ENCODE measurements at regions of chr17 and their contacts with region 1.

Region 1: DNA sequence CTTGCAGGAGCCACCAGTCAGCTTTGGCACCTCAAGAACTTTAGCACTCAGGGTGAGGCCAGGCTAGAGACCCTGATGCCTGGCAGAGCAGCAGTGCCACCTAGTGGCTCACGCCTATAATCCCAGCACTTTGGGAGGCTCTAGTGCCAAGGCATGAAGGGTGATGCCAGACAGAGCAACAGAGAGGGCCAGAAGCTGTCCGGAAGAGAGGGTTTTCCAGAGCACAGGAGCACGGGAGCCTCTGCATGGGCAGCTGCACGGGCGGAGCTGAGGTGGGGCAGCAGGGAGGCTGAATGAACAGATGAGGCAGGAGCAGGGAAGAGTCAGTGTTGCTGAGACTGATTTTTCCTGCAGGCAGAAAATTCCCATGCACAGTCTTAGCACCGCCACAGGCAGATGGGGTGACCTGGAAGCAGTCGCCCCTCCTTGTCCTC is 38.9 kb downstream of the MYH3 start:
- DNase-seq: peak; percentile 72
- H3K4me3 Mint-ChIP-seq: no peak overlapping the region
- H3K27ac Mint-ChIP-seq: no peak overlapping the region
- H3K4me1 Mint-ChIP-seq: no peaks in the 10 kb centered on the region
- H3K27me3 Mint-ChIP-seq: peaks cover 5% of the 10 kb centered on the region

Region 2: DNA sequence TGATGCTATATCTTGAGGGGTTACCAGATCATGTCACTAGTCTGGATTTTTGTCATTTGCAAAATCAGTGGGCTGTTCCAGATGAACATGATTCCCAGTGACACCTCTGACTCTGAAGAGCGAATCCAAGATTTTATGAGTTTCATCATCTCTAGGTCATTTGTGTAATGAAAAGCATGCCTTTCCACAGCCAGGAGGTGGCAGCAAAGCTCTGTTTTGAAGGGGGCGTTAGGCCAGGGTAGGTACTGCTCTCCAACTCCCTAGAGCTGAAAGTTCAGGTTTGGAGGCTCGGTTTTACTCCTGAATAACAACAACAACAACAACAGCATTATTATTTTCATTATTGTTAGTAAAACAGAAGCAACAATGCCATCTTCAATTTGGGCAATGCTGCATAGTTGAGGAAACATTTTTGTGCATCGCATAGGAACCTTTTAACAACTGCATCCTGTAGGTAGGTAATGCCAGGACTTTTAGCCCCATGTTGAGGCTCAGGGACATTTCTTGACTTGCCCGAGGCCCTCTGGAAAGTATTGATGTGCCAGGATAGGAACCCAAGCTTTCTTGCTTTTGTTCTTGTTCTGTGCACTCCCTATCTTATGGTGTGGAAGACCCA is 322.4 kb before region 1 on chr17:
- CTCF ChIA-PET with region 1: interaction called, 11 read pairs
- DNase-seq: peak; percentile 45
- H3K4me3 Mint-ChIP-seq: no peak overlapping the region
- H3K27ac Mint-ChIP-seq: no peak overlapping the region
- H3K4me1 Mint-ChIP-seq: peaks cover 6% of the 10 kb centered on the region
- H3K27me3 Mint-ChIP-seq: no peaks in the 10 kb centered on the region

Region 3: DNA sequence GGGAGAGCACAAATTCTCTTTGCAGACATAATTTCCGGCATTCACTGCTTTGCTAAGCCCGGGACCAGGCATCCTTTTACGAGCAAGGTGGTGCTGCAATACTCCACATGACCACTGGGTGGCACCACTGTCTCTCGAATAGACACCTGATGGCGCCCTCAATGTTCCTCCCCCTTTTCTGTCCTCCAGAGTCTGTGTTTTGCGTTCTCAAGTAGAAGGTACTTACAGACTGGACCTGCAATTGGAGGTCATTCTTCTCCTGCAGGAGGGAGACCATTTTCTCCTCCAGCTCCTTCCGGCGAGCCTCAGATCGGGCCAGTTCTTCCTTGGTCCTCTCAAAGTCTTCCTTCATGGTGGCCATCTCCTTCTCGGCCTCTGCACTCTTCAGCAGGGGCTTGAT is 290.6 kb before region 1 on chr17:
- CTCF ChIA-PET with region 1: interaction called, 72 read pairs
- DNase-seq: peak; percentile 78
- H3K4me3 Mint-ChIP-seq: no peak overlapping the region
- H3K27ac Mint-ChIP-seq: no peak overlapping the region
- H3K4me1 Mint-ChIP-seq: no peaks in the 10 kb centered on the region
- H3K27me3 Mint-ChIP-seq: peaks cover 4% of the 10 kb centered on the region

Region 4: GRCh38 chr17:10463402-10463801 is 154.8 kb before region 1 on chr17:
- CTCF ChIA-PET with region 1: no interaction called
- DNase-seq: no peak
- H3K4me3 Mint-ChIP-seq: no peak overlapping the region
- H3K27ac Mint-ChIP-seq: no peak overlapping the region
- H3K4me1 Mint-ChIP-seq: no peaks in the 10 kb centered on the region
- H3K27me3 Mint-ChIP-seq: no peaks in the 10 kb centered on the region

Region 5: DNA sequence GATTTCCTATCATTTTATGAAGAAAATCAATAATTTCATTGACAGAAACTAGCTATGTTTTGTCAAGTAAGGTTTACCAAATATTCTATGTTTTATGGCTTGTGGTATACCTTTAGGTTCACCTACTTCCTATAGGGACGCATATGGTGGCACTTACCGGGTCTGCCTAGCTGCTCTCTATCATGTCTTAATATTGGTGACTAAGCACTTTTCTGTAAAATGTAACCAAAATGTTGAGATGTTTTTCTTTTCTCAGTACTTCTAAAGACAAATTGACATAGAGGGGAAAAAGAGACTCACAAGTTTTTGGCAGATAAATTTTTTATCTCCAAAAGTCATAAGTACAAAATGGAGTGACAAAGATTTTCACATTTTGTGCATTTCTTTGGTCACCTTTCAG is 126.2 kb before region 1 on chr17:
- CTCF ChIA-PET with region 1: no interaction called
- DNase-seq: no peak
- H3K4me3 Mint-ChIP-seq: no peak overlapping the region
- H3K27ac Mint-ChIP-seq: no peak overlapping the region
- H3K4me1 Mint-ChIP-seq: no peaks in the 10 kb centered on the region
- H3K27me3 Mint-ChIP-seq: peaks cover 3% of the 10 kb centered on the region

Region 6: DNA sequence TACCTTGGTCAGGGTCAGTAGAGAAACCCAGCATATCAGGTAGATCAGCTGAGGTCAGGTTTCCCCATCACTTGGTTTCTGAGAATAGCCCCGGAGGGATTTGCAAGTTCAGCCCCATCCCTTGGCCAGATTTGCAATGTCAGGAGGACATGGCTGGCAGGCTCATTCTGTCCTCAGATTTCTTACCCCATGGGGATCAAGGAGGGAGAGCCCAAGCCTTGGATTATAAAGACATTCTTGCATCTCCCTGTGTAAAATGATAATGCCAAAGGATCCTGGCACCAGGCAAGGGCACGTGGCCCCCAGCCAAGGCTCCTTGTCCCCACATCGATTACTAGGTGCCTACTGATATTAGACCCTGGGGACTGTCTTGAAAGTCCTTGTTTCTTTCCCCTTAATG is 14.3 kb before region 1 on chr17:
- CTCF ChIA-PET with region 1: interaction called, 10 read pairs
- DNase-seq: no peak
- H3K4me3 Mint-ChIP-seq: no peak overlapping the region
- H3K27ac Mint-ChIP-seq: no peak overlapping the region
- H3K4me1 Mint-ChIP-seq: no peaks in the 10 kb centered on the region
- H3K27me3 Mint-ChIP-seq: peaks cover 4% of the 10 kb centered on the region

Region 7: GRCh38 chr17:10631048-10631700 is 13.0 kb after region 1 on chr17:
- CTCF ChIA-PET with region 1: interaction called, 122 read pairs
- DNase-seq: peak; percentile 33
- H3K4me3 Mint-ChIP-seq: no peak overlapping the region
- H3K27ac Mint-ChIP-seq: no peak overlapping the region
- H3K4me1 Mint-ChIP-seq: peaks cover 3% of the 10 kb centered on the region
- H3K27me3 Mint-ChIP-seq: no peaks in the 10 kb centered on the region